Right ventricle myocardium inferior (tissue), 1 donor: ENCODE measurements at regions of chr2 and their contacts with region 1.

Region 1: GRCh38 chr2:111905990-111906735 is 7.8 kb downstream of the MERTK start:
- DNase-seq: no peak
- ATAC-seq: peak; percentile 43

Region 2: DNA sequence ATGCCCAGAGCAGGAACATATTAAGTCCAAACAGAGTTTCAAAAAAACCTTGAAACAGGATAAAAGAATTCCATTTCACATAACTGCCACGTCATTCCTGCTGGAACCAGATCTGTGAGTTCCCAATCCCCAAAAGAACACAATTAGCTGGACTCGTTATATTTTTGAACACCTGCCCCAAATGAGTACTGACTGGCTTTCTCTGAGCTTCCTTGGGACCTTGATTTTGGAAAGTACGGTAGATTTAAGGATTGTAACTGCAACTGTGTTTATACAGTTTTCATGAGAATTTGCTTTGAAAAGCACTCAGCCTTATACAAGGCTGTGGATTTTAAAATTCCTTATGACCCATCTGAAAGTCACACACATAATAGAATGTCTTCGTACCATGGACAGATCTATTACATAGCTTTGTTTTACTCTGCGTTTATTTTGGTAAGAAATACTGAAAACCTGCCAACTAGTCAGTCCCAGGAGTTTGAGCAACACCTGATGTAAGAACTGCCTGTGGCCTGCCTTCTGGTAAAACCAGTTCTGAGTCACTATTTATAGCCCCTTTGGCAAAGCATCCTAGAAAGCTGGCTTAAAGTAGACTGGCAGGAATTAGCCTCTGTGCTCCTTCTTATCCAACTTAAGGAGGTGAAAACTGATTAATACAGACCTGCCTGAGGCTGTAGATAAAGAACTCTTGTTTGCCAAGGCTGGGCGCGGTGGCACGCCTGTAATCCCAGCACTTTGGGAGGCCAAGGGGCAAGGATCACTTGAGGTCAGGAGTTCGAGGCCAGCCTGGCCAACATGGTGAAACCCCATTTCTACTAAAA is 40.3 kb after region 1 on chr2:
- intact Hi-C with region 1: loop called (anchors 1 kb)
- DNase-seq: no peak
- ATAC-seq: peak; percentile 83

Region 3: GRCh38 chr2:111975053-111975552 is 68.9 kb after region 1 on chr2:
- intact Hi-C with region 1: no loop called
- DNase-seq: no peak
- ATAC-seq: no peak

Region 4: GRCh38 chr2:112108178-112108832 is 202.1 kb after region 1 on chr2:
- intact Hi-C with region 1: no loop called
- DNase-seq: no peak
- ATAC-seq: no peak

Region 5: DNA sequence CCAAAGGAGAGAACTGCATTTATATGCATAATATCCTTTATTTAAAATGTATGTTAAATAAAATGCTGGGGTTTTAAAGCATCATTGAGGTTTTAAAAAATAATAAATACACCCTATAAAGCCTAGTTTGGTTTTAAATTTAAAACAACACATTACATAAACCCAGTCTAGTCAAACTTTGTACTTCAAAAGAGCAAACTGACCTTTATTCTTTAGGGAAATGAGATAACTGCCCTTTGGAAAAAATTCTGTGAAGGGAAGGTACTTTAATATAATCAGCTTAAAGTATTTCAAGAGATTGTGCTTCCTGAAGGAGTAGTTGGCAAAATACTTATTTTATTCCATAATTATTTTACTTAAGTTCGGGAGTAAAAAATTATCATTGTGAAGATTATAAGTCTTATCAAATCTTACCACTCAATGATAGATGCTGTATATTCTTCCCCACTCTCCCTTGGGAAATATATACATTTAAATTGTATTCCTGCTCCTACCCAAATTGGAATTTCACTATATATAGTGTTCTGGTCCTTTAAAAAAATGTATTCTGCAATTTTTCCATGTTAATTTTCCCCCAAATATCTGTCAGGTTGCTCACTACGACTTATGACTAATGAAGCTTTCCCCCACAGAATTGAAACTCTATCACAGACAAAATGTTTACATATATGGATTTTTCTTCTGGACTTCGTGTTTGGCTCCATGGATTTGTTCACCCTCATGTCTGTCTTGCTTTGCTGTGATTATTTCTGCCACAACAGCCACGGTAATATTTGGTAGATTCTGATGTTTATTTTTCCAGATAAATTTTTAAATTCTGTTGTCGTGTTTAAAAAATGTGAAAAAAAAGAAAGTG is 411.4 kb after region 1 on chr2:
- intact Hi-C with region 1: no loop called
- DNase-seq: no peak
- ATAC-seq: no peak